CD8-positive, alpha-beta T cell (primary cell): ENCODE measurements at regions of chr10 and their contacts with region 1.

Region 1: DNA sequence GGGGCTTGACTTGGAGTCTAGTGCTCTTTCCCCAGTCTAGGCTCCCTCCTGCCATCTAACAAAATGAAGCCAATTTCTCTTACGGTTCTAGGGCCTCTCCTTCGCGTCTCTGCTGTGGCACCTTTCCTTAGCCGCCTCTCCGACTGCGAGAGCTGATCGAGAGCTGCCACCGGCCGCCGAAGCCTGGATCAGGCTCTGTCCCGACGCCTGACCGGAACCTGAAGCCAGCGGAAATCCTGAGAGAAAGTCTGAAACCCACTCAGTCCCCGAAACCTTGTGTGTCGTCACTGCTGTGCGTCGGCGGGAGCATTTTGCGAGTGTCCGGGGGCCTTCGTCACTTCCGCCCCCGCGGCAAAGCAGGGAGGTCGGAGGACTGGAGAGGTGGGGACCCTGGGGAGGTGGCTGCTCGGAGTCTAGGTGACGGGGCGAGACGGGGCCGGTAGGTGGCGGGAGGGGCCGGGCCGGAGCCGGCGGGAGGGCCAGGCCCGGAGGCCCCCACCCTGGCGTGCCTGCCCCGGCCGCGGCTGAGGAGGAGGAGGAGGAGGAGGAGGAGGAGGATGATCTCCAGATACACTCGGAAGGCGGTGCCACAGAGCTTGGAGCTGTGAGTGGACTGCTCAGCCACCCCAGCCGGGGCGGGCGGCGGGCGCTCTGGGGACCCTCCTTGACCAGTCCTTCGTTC is at the starts of genes ECD and FAM149B1:
- DNase-seq: peak; percentile 74 to 96 (median 91)
- ATAC-seq: peak; percentile 93
- H3K4me3 ChIP-seq: peak within 1 kb of the TSS; percentile 77 to 92
- H3K4me3 Mint-ChIP-seq: peak within 1 kb of the TSS; percentile 100
- H3K27ac ChIP-seq: peak within 1 kb of the TSS; percentile 93 to 97
- H3K27ac Mint-ChIP-seq: peak within 1 kb of the TSS; percentile 100
- H3K4me1 ChIP-seq: peaks cover 29% of the 10 kb centered on the region
- H3K4me1 Mint-ChIP-seq: peaks cover 42% of the 10 kb centered on the region
- H3K27me3 ChIP-seq: no peaks in the 10 kb centered on the region
- H3K27me3 Mint-ChIP-seq: no peaks in the 10 kb centered on the region
- CTCF ChIP-seq: peak; percentile 16
- total RNA-seq, gene ECD: 56.5 to 59.1 TPM
- total RNA-seq, gene FAM149B1: 5.9 to 6.3 TPM

Region 2: GRCh38 chr10:72354478-72355213 is 813.3 kb before region 1 on chr10 and contains the start of gene DNAJB12:
- CTCF ChIA-PET with region 1: no interaction called
- POLR2A ChIA-PET with region 1: no interaction called
- intact Hi-C with region 1: loop called in 1 of 2 experiments (anchors 5 kb)
- DNase-seq: peak; percentile 76 to 95 (median 88)
- ATAC-seq: peak; percentile 82
- H3K4me3 ChIP-seq: peak within 1 kb of the TSS; percentile 96 to 98
- H3K4me3 Mint-ChIP-seq: peak within 1 kb of the TSS; percentile 98
- H3K27ac ChIP-seq: peak within 1 kb of the TSS; percentile 87 to 97
- H3K27ac Mint-ChIP-seq: peak within 1 kb of the TSS; percentile 96
- H3K4me1 ChIP-seq: peaks cover 19% of the 10 kb centered on the region
- H3K4me1 Mint-ChIP-seq: peaks cover 45% of the 10 kb centered on the region
- H3K27me3 ChIP-seq: no peaks in the 10 kb centered on the region
- H3K27me3 Mint-ChIP-seq: no peaks in the 10 kb centered on the region
- CTCF ChIP-seq: no peak
- total RNA-seq, gene DNAJB12: 33.9 to 37.5 TPM

Region 3: GRCh38 chr10:72625608-72626443 is 542.1 kb before region 1 on chr10 and contains the start of gene MICU1:
- CTCF ChIA-PET with region 1: no interaction called
- POLR2A ChIA-PET with region 1: no interaction called
- intact Hi-C with region 1: loop called in 1 of 2 experiments (anchors 5 kb)
- DNase-seq: peak; percentile 84 to 97 (median 93)
- ATAC-seq: peak; percentile 99
- H3K4me3 ChIP-seq: peak within 1 kb of the TSS; percentile 91 to 99
- H3K4me3 Mint-ChIP-seq: peak within 1 kb of the TSS; percentile 98
- H3K27ac ChIP-seq: peak within 1 kb of the TSS; percentile 63 to 64
- H3K27ac Mint-ChIP-seq: peak within 1 kb of the TSS; percentile 92
- H3K4me1 ChIP-seq: peaks cover 11% of the 10 kb centered on the region
- H3K4me1 Mint-ChIP-seq: peaks cover 23% of the 10 kb centered on the region
- H3K27me3 ChIP-seq: no peaks in the 10 kb centered on the region
- H3K27me3 Mint-ChIP-seq: no peaks in the 10 kb centered on the region
- CTCF ChIP-seq: no peak
- total RNA-seq, gene MICU1: 8.2 to 11.3 TPM

Region 4: GRCh38 chr10:73110345-73110849 is 57.5 kb before region 1 on chr10 and contains the start of gene NUDT13:
- CTCF ChIA-PET with region 1: no interaction called
- POLR2A ChIA-PET with region 1: no interaction called
- intact Hi-C with region 1: loop called (anchors 1 to 5 kb)
- DNase-seq: peak; percentile 10 to 79 (median 48)
- ATAC-seq: peak; percentile 91
- H3K4me3 ChIP-seq: peak within 1 kb of the TSS; percentile 57 to 59
- H3K4me3 Mint-ChIP-seq: peak within 1 kb of the TSS; percentile 95
- H3K27ac ChIP-seq: peak within 1 kb of the TSS; percentile 36 to 73
- H3K27ac Mint-ChIP-seq: peak within 1 kb of the TSS; percentile 89
- H3K4me1 ChIP-seq: no peaks in the 10 kb centered on the region
- H3K4me1 Mint-ChIP-seq: peaks cover 12% of the 10 kb centered on the region
- H3K27me3 ChIP-seq: no peaks in the 10 kb centered on the region
- H3K27me3 Mint-ChIP-seq: no peaks in the 10 kb centered on the region
- CTCF ChIP-seq: no peak
- total RNA-seq, gene NUDT13: 0.50 to 0.71 TPM

Region 5: GRCh38 chr10:73332221-73332778 is 164.4 kb after region 1 on chr10:
- CTCF ChIA-PET with region 1: no interaction called
- POLR2A ChIA-PET with region 1: no interaction called
- intact Hi-C with region 1: no loop called
- DNase-seq: no peak
- ATAC-seq: no peak
- H3K4me3 ChIP-seq: no peak overlapping the region
- H3K4me3 Mint-ChIP-seq: no peak overlapping the region
- H3K27ac ChIP-seq: no peak overlapping the region
- H3K27ac Mint-ChIP-seq: no peak overlapping the region
- H3K4me1 ChIP-seq: no peaks in the 10 kb centered on the region
- H3K4me1 Mint-ChIP-seq: no peaks in the 10 kb centered on the region
- H3K27me3 ChIP-seq: no peaks in the 10 kb centered on the region
- H3K27me3 Mint-ChIP-seq: no peaks in the 10 kb centered on the region
- CTCF ChIP-seq: no peak

Region 6: DNA sequence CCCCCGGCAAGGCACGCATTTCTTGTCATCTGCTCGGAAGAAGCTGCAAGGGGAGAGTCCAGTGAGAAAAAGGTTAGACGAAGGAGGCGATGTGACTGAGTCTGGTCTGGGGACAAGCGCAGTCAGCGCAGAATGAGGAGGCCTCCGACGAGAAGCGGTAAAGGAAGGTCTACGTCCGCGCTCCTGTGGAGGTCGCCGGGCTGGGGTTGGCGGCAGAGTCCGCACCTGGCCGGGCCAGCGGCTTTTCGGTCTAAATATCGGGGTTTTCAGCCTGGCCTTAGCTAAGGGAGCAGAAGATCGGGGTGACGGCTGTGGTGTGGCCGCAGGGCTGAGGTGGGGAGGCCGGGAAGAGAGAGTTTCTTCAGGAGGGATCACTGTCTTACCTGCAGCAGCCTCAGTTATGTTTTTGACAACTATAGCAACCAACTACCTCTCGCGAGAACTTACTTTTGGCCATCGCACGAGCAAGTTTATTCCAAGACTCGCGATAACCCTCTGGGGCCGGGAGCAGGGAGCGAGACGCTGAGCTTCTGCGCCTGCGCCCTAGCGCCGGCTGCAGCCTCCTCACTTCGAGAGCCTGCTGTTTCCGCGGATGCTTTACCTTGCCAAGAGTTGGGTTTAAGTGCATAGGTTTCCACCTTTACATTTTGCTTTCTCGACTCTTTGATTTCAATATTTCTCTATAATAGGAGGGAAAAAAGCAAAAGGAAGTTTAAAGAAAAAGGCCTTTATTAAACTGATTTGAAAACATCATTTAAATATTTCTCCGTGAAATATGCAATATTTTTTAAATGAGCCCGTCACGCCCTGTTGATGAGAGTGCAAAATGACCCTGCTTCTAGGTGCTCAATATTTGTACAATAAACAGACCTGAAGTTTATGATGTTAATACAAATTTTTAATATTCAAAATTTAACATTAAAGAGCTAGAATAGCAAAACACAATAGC is 190.7 kb after region 1 on chr10 and contains the start of gene CFAP70:
- CTCF ChIA-PET with region 1: no interaction called
- POLR2A ChIA-PET with region 1: no interaction called
- intact Hi-C with region 1: loop called in 1 of 2 experiments (anchors 1 kb)
- DNase-seq: peak; percentile 83 to 98 (median 90)
- ATAC-seq: peak; percentile 96
- H3K4me3 ChIP-seq: peak within 1 kb of the TSS; percentile 71 to 75
- H3K4me3 Mint-ChIP-seq: peak within 1 kb of the TSS; percentile 98
- H3K27ac ChIP-seq: peak within 1 kb of the TSS; percentile 78 to 88
- H3K27ac Mint-ChIP-seq: peak within 1 kb of the TSS; percentile 96
- H3K4me1 ChIP-seq: peaks cover 5% of the 10 kb centered on the region
- H3K4me1 Mint-ChIP-seq: peaks cover 16% of the 10 kb centered on the region
- H3K27me3 ChIP-seq: peaks cover 0 to 8% of the 10 kb centered on the region in 2 experiments
- H3K27me3 Mint-ChIP-seq: peaks cover 2% of the 10 kb centered on the region
- CTCF ChIP-seq: no peak
- total RNA-seq, gene CFAP70: 2.4 to 2.8 TPM